ENCODE measurements at regions of chr19 and their contacts with region 1.

Region 1: DNA sequence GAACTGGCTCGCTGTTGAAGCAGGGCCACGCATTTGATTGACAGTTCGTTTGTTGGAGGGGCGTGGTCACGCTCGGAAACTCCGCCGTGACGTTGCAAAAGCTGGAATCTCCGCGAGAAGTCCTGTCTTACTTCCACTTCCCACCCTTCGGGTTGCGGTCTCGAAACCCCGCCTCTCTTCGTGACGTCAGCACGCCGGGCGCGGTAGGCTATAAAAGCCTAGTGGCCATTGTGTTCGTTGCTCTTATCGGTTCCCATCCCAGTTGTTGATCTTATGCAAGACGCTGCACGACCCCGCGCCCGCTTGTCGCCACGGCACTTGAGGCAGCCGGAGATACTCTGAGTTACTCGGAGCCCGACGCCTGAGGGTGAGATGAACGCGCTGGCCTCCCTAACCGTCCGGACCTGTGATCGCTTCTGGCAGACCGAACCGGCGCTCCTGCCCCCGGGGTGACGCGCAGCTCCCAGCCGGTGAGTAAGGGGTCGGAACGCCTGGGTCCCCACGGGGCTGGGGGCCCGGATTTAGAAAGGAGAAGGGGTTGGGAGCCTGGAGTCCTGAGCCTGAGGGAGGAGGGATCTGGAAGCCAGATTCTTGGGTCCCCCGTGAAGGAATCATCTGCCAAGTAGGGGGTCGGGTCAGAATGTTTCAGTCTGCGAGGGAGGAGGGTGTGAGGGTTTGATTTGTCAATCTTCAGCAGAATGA is at the start of gene PPP1R15A:
- DNase-seq: peak; percentile 99
- H3K4me3 Mint-ChIP-seq: peak within 1 kb of the TSS; percentile 98
- H3K27ac Mint-ChIP-seq: peak within 1 kb of the TSS; percentile 100
- H3K4me1 Mint-ChIP-seq: peaks cover 38% of the 10 kb centered on the region
- H3K27me3 Mint-ChIP-seq: no peaks in the 10 kb centered on the region
- CTCF ChIP-seq: no peak
- total RNA-seq, gene PPP1R15A: 207 and 248 TPM in 2 replicates

Region 2: DNA sequence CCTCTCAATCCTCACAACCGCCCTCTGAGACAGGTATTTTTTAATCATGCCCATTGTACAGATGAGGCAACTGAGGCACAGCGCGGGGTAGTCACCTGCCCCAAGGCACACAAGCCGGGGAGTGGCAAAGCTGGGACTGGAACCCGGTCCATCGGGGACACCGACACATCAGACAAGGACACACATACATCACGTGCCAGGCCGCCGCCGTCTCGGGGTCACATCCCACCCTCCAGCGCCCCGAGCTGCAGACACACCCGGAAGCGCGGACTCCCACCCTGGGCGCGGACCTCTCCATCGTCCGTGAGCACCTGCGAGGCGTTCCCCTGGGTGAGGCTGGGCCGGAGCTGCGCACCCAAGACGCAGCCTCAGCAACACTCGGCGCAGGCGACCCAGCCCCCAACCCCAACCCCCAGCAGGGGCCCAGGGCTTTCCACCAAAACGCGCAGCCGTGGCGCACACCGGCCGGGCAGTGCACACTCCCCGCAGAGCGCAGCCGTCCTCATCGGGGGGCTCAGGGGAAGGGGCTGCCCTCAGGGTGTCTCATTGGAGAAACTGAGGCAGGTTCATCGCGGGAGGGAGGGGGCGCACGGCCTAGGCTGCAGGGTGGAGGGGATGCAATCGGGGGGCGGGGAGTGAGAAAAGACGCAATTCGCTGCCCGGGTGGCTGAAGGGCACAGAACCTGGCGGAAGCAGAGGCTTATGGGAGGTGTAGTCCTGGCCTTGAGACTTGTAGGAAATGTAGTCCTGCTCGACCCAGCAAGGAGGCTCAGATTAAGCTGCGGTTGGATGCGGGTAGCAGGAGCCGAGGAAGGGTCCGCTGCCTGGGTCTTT is 358.8 kb before region 1 on chr19:
- CTCF ChIA-PET with region 1: no interaction called
- POLR2A ChIA-PET with region 1: no interaction called
- intact Hi-C with region 1: no loop called
- DNase-seq: peak; percentile 78
- H3K4me3 Mint-ChIP-seq: no peak overlapping the region
- H3K27ac Mint-ChIP-seq: no peak overlapping the region
- H3K4me1 Mint-ChIP-seq: no peaks in the 10 kb centered on the region
- H3K27me3 Mint-ChIP-seq: no peaks in the 10 kb centered on the region
- CTCF ChIP-seq: no peak

Region 3: DNA sequence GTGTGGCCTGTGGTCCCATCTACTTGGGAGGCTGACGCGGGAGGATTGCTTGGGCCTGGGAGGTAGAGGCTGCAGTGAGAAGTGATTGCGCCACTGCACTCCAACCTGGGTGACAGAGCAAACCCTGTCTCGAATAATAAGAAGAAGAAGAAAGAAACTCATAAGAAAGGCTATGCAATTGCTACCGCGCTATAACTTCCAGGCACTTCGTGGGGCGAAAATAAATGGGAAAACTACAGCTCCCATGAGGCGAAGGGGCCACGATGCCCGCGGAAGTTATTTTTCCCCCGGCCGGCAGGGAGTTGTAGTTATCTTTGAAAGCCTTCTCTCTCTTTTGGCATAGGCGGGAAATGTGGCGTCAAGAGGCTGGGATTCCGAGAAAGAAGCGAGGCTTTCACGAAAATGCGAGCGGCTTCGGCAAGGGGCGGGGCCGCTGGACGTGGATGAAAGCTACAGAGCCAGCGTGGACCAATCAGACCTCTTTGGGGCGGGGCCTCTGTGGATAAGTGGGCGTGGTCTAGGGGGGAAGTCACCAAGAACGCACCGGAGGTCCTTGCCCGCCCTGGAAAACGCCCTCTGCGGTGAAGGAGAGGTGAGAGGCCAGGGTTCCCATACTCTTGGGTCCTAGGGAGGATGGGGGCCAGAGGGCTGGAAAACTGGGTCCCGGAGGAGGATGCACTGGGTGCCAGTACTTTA is 27.6 kb after region 1 on chr19 and contains the start of gene NUCB1:
- CTCF ChIA-PET with region 1: no interaction called
- POLR2A ChIA-PET with region 1: interaction called, 32 read pairs
- intact Hi-C with region 1: no loop called
- DNase-seq: peak; percentile 99
- H3K4me3 Mint-ChIP-seq: peak within 1 kb of the TSS; percentile 99
- H3K27ac Mint-ChIP-seq: peak within 1 kb of the TSS; percentile 87
- H3K4me1 Mint-ChIP-seq: peaks cover 14% of the 10 kb centered on the region
- H3K27me3 Mint-ChIP-seq: no peaks in the 10 kb centered on the region
- CTCF ChIP-seq: no peak
- total RNA-seq, gene NUCB1: 61.4 and 76.8 TPM in 2 replicates

Region 4: DNA sequence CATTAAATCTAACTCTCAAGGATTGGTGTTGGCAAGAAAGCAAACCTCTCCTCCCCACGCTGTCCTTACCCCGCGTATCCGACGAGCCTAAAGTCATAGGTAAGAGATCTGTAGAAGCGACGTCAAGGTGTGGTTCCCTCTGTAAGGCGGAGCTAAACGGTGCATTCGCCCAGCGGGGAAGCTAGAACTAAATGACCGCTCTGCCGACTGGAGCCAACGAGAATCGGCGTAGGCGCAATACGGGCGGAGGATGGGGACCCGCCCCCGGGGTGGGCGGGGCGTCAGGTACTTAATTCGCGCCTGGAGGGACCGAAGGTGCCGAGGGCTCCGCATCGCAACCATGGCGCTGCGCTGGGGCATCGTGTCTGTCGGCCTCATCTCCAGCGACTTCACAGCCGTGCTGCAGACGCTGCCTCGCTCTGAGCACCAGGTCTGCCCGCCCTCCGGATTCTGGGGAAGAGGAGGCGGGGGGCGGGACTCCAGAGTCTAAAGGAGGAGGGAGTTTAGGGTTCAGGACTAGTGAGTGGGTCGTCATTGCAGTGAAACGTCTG is 61.1 kb after region 1 on chr19 and contains the start of gene DHDH:
- CTCF ChIA-PET with region 1: no interaction called
- POLR2A ChIA-PET with region 1: interaction called, 11 read pairs
- intact Hi-C with region 1: no loop called
- DNase-seq: peak; percentile 90
- H3K4me3 Mint-ChIP-seq: peak within 1 kb of the TSS; percentile 75
- H3K27ac Mint-ChIP-seq: no peak within 1 kb of the TSS
- H3K4me1 Mint-ChIP-seq: peaks cover 5% of the 10 kb centered on the region
- H3K27me3 Mint-ChIP-seq: no peaks in the 10 kb centered on the region
- CTCF ChIP-seq: no peak
- total RNA-seq, gene DHDH: not detected in 2 replicates

Region 5: DNA sequence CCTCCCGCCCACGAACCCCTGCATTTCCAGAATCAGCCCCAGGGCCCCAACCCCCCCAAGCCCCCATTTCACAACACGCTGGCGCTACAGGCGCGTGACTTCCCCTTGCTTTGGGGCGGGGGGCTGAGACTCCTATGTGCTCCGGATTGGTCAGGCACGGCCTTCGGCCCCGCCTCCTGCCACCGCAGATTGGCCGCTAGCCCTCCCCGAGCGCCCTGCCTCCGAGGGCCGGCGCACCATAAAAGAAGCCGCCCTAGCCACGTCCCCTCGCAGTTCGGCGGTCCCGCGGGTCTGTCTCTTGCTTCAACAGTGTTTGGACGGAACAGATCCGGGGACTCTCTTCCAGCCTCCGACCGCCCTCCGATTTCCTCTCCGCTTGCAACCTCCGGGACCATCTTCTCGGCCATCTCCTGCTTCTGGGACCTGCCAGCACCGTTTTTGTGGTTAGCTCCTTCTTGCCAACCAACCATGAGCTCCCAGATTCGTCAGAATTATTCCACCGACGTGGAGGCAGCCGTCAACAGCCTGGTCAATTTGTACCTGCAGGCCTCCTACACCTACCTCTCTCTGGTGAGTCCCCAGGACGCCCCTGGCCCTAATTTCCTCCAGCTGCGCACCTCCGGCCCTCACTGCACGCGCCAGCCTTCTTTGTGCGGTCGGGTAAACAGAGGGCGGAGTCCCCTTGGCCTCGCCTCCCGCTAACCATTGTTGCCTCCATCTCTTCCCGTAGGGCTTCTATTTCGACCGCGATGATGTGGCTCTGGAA is 92.9 kb after region 1 on chr19 and contains the start of gene FTL:
- CTCF ChIA-PET with region 1: interaction called, 4 read pairs
- POLR2A ChIA-PET with region 1: interaction called, 49 read pairs
- intact Hi-C with region 1: loop called (anchors 2 kb)
- DNase-seq: peak; percentile 95
- H3K4me3 Mint-ChIP-seq: peak within 1 kb of the TSS; percentile 97
- H3K27ac Mint-ChIP-seq: peak within 1 kb of the TSS; percentile 96
- H3K4me1 Mint-ChIP-seq: peaks cover 35% of the 10 kb centered on the region
- H3K27me3 Mint-ChIP-seq: no peaks in the 10 kb centered on the region
- CTCF ChIP-seq: no peak
- total RNA-seq, gene FTL: 275 and 390 TPM in 2 replicates

Region 6: GRCh38 chr19:50242581-50242980 is 1370.2 kb after region 1 on chr19:
- CTCF ChIA-PET with region 1: no interaction called
- POLR2A ChIA-PET with region 1: no interaction called
- intact Hi-C with region 1: no loop called
- DNase-seq: no peak
- H3K4me3 Mint-ChIP-seq: no peak overlapping the region
- H3K27ac Mint-ChIP-seq: no peak overlapping the region
- H3K4me1 Mint-ChIP-seq: no peaks in the 10 kb centered on the region
- H3K27me3 Mint-ChIP-seq: no peaks in the 10 kb centered on the region
- CTCF ChIP-seq: no peak